Activated T-helper 1 cell treated with anti-CD3 and anti-CD28 coated beads, Interleukin-12 subunit alpha, Interleukin-12 subunit beta, Interleukin-2, Interleukin-4 antibody, amounts not matched to agents 30 ng/mL and 10 ng/mL and 1 ng/mL, durations not matched to agents 14 hours and 24 hours and 36 hours (primary cell): ENCODE measurements at regions of chr12 and their contacts with region 1.

Region 1: DNA sequence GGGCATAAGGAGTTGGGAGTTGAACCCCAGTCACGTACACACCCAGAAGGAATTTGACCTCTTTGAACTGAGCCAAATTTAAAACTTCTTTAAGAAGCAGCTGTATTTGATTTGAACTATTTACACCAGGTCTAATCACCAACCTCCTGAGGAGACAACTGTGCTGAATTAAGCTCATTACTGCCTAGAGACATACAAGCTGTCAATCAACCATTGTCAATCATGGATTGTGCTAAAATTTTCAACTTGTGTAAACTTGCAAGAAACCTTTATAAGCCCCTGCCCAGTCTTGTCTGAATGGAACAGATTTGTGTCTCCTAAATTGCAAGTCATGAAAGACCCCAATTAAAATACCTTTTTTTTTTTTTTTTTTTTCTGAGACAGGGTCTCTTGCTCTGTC is 44.3 kb upstream of the RESF1 start:
- DNase-seq: no peak
- H3K4me3 Mint-ChIP-seq: no peak overlapping the region
- H3K27ac Mint-ChIP-seq: no peak overlapping the region
- H3K4me1 Mint-ChIP-seq: no peaks in the 10 kb centered on the region
- H3K27me3 Mint-ChIP-seq: no peaks in the 10 kb centered on the region

Region 2: DNA sequence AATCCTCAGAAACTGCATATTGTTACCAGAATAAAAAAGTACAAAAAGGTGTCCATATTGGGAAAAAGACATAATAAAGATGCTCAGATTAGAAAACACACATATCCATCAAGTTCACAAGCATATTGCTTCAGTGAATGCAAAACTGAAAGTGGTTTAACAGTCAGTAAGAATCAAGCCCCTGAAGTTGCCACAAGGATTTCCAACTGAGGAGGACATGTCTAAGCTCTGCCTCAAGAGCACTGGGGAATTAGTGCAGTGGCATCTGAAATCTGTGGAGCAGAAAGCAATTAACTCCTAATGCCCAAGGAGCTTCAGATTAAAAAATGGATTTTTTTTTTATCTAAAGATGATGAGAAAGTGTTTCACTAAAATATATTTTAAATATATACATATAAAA is 437.2 kb before region 1 on chr12:
- intact Hi-C with region 1: loop called (anchors 5 kb)
- DNase-seq: no peak
- H3K4me3 Mint-ChIP-seq: no peak overlapping the region
- H3K27ac Mint-ChIP-seq: no peak overlapping the region
- H3K4me1 Mint-ChIP-seq: no peaks in the 10 kb centered on the region
- H3K27me3 Mint-ChIP-seq: no peaks in the 10 kb centered on the region

Region 3: GRCh38 chr12:31966558-31967205 is 51.8 kb after region 1 on chr12:
- intact Hi-C with region 1: no loop called
- DNase-seq: no peak
- H3K4me3 Mint-ChIP-seq: peak overlapping the region; percentile 57
- H3K27ac Mint-ChIP-seq: peak overlapping the region; percentile 68
- H3K4me1 Mint-ChIP-seq: peaks cover 59% of the 10 kb centered on the region
- H3K27me3 Mint-ChIP-seq: no peaks in the 10 kb centered on the region

Region 4: GRCh38 chr12:32334371-32334777 is 419.4 kb after region 1 on chr12:
- intact Hi-C with region 1: no loop called
- DNase-seq: no peak
- H3K4me3 Mint-ChIP-seq: no peak overlapping the region
- H3K27ac Mint-ChIP-seq: no peak overlapping the region
- H3K4me1 Mint-ChIP-seq: peaks cover 9% of the 10 kb centered on the region
- H3K27me3 Mint-ChIP-seq: no peaks in the 10 kb centered on the region